ENCODE measurements at regions of chr12 and their contacts with region 1.

Region 1: GRCh38 chr12:25089738-25090137 is 105.2 kb downstream of the DNAI7 start:
- DNase-seq: peak in 2 of 9 experiments; percentile 3 to 16
- ATAC-seq: no peak
- H3K4me3 ChIP-seq: no peak overlapping the region
- H3K4me3 Mint-ChIP-seq: no peak overlapping the region
- H3K27ac ChIP-seq: peak overlapping the region in 1 of 2 experiments; percentile 51
- H3K27ac Mint-ChIP-seq: peak overlapping the region; percentile 64
- H3K4me1 ChIP-seq: peaks cover 4% of the 10 kb centered on the region
- H3K4me1 Mint-ChIP-seq: peaks cover 28% of the 10 kb centered on the region
- H3K27me3 ChIP-seq: no peaks in the 10 kb centered on the region
- H3K27me3 Mint-ChIP-seq: no peaks in the 10 kb centered on the region
- CTCF ChIP-seq: no peak

Region 2: DNA sequence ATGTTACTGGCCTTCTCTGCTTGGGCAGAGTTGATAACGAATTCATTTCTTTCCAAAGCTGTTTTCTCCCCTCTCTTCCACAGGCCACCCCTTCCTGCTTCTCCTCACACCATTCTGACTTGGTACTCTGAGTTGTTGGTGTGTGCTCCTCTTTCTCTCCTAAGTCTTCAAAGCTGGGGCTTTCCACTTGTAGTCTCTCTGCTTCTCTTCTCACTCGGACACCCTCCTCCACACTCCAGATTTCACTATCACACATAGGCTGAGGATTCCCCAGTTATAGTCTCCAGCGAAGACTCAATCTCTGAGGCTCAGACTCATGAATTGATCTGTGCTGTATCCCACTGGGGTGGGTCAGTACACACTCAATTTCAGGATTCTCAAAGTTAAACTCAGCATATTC is 1306.7 kb after region 1 on chr12:
- CTCF ChIA-PET with region 1: no interaction called
- POLR2A ChIA-PET with region 1: no interaction called
- intact Hi-C with region 1: loop called in 1 of 2 experiments (anchors 5 kb)
- DNase-seq: no peak
- ATAC-seq: no peak
- H3K4me3 ChIP-seq: no peak overlapping the region
- H3K4me3 Mint-ChIP-seq: no peak overlapping the region
- H3K27ac ChIP-seq: no peak overlapping the region
- H3K27ac Mint-ChIP-seq: no peak overlapping the region
- H3K4me1 ChIP-seq: no peaks in the 10 kb centered on the region
- H3K4me1 Mint-ChIP-seq: no peaks in the 10 kb centered on the region
- H3K27me3 ChIP-seq: no peaks in the 10 kb centered on the region
- H3K27me3 Mint-ChIP-seq: no peaks in the 10 kb centered on the region
- CTCF ChIP-seq: no peak

Measured in CD8-positive, alpha-beta T cell (primary cell).